ENCODE measurements at regions of chr10 and their contacts with region 1.

Region 1: GRCh38 chr10:72889391-72889831 is 4.1 kb upstream of the OIT3 start:
- DNase-seq: peak; percentile 99
- H3K4me3 ChIP-seq: no peak overlapping the region
- H3K27ac ChIP-seq: peak overlapping the region; percentile 56
- H3K4me1 ChIP-seq: peaks cover 26% of the 10 kb centered on the region
- H3K27me3 ChIP-seq: no peaks in the 10 kb centered on the region
- CTCF ChIP-seq: no peak

Region 2: DNA sequence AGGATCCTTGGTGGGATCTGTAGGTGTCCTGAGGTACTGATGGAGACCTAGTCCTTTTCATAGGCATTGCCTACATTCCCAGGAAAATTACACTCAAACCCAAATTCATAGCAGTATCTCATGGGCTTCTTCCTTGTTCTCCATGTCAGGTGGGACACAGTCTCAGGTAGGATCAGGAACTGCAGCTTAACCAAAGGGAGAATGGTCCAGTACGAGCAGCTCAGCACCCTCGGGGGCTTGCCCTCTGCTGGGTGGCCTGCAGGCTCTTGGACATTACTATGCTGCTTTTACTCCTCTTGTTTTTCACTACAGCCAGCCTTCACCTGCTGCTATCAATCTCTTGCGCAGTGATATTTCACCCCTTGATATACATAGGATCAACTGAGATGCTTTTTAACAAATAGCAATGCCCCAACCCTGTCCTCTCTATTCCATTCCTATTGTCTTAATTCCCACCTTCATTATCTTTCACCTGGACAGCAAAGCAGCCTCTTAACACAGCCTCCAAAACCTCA is 36.6 kb after region 1 on chr10:
- CTCF ChIA-PET with region 1: no interaction called
- dilution Hi-C with region 1: no loop called
- in situ Hi-C with region 1: no loop called
- intact Hi-C with region 1: no loop called
- DNase-seq: no peak
- H3K4me3 ChIP-seq: no peak overlapping the region
- H3K27ac ChIP-seq: no peak overlapping the region
- H3K4me1 ChIP-seq: no peaks in the 10 kb centered on the region
- H3K27me3 ChIP-seq: peaks cover 2% of the 10 kb centered on the region
- CTCF ChIP-seq: peak in 1 of 2 donors; percentile 10

Region 3: GRCh38 chr10:73060738-73061635 is 171.6 kb after region 1 on chr10:
- CTCF ChIA-PET with region 1: no interaction called
- dilution Hi-C with region 1: no loop called
- in situ Hi-C with region 1: no loop called
- intact Hi-C with region 1: loop called (anchors 5 kb)
- DNase-seq: peak; percentile 37
- H3K4me3 ChIP-seq: no peak overlapping the region
- H3K27ac ChIP-seq: no peak overlapping the region
- H3K4me1 ChIP-seq: no peaks in the 10 kb centered on the region
- H3K27me3 ChIP-seq: no peaks in the 10 kb centered on the region
- CTCF ChIP-seq: peak; percentile 34 to 58

Region 4: DNA sequence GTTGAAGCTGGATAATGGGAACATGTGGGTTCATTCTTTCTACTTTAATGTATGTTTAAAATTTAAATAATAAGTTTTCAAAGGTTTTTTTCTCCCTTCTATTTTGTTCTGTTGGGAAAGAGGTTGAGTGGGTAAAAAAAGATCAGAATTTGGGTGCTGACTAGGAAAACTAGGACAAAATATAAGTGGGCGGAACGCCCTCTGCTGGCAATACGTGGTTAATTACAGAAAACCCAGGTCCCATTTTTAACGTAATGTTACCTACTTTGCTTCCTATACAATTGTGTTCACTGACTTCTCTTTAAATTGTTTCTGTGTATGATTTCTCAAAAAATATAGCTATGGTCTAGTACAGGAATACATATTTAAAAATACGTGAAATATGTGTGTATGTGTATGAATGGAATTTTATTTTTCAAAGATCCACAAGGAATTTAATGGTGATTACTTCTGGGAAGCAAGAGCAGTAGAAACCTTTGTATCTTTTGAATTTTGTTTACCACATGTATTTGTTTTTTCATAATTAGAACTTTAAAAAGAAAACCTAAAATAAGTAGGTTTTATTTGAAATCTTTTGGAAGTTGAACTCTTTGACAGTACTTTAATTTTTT is 269.7 kb after region 1 on chr10:
- CTCF ChIA-PET with region 1: no interaction called
- dilution Hi-C with region 1: no loop called
- in situ Hi-C with region 1: no loop called
- intact Hi-C with region 1: loop called (anchors 1 kb)
- DNase-seq: peak; percentile 30
- H3K4me3 ChIP-seq: no peak overlapping the region
- H3K27ac ChIP-seq: no peak overlapping the region
- H3K4me1 ChIP-seq: no peaks in the 10 kb centered on the region
- H3K27me3 ChIP-seq: no peaks in the 10 kb centered on the region
- CTCF ChIP-seq: peak; percentile 70 to 72

Measured in mammary epithelial cell (primary cell).